ENCODE measurements at regions of chr11 and their contacts with region 1.

Region 1: GRCh38 chr11:9573052-9573774 is at the start of gene WEE1:
- DNase-seq: peak; percentile 86 to 98
- H3K4me3 ChIP-seq: peak within 1 kb of the TSS; percentile 87
- H3K27ac ChIP-seq: peak within 1 kb of the TSS; percentile 98
- H3K4me1 ChIP-seq: peaks cover 50% of the 10 kb centered on the region
- H3K27me3 ChIP-seq: no peaks in the 10 kb centered on the region
- CTCF ChIP-seq: no peak
- total RNA-seq, gene WEE1: 32.2 and 37.1 TPM in 2 replicates

Region 2: GRCh38 chr11:9506489-9507276 is 66.5 kb before region 1 on chr11:
- CTCF ChIA-PET with region 1: no interaction called
- POLR2A ChIA-PET with region 1: interaction called, 8 read pairs
- intact Hi-C with region 1: loop called (anchors 5 kb)
- DNase-seq: peak; percentile 49 to 62
- H3K4me3 ChIP-seq: no peak overlapping the region
- H3K27ac ChIP-seq: 0 out of 2 replicates have a peak overlapping the region, but pooled peaks have one; percentile 13
- H3K4me1 ChIP-seq: no peaks in the 10 kb centered on the region
- H3K27me3 ChIP-seq: no peaks in the 10 kb centered on the region
- CTCF ChIP-seq: peak; percentile 84

Region 3: DNA sequence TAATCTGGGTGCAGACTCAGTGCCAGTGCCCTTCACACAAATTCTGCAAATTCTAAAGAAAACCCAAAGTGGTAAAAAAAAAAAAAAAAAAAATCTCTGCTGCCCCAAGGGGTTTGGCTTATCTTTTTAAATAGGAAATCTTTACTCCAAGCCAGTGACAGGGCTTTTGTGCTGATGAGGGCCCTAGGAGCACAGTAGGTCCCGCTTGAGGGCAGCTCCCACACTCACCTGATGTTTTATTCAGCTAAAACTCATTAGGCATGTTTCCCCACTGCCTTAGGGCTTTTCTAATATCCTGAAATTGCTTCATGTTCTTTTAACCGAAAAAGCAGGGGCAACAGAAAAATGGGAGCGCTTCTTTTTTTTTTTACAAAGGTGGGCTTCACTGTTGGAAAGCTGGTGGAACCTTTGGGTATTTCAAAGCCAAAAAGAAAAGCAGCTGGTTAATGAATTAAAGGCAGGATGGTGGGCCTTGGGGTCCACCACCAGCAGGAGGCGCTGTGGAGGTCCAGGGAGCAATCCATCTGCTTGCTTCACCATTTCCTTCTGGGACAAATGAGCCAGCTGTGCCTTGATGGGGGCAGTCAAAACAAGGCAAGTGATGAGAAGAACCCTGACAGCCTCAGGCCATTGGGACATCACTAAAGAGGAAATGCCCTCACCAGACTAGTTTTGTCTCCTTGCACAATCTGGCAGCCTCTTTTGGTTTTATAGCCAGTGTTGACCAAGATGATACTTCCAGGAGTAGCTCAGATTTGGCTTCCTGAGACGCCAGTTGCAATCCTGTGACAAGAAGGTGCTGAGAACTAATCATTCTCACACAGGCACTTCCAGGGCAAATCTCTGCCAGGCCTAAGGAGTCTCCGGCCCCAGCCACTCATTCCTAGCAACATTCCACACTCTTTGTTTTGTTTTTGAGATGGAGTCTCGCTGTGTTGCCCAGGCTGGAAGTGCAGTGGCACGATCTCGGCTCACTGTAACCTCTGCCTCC is 38.1 kb before region 1 on chr11:
- CTCF ChIA-PET with region 1: interaction called, 5 read pairs
- POLR2A ChIA-PET with region 1: no interaction called
- intact Hi-C with region 1: loop called (anchors 1 kb)
- DNase-seq: peak; percentile 48 to 88
- H3K4me3 ChIP-seq: no peak overlapping the region
- H3K27ac ChIP-seq: peak overlapping the region; percentile 54
- H3K4me1 ChIP-seq: peaks cover 30% of the 10 kb centered on the region
- H3K27me3 ChIP-seq: no peaks in the 10 kb centered on the region
- CTCF ChIP-seq: peak; percentile 86

Region 4: DNA sequence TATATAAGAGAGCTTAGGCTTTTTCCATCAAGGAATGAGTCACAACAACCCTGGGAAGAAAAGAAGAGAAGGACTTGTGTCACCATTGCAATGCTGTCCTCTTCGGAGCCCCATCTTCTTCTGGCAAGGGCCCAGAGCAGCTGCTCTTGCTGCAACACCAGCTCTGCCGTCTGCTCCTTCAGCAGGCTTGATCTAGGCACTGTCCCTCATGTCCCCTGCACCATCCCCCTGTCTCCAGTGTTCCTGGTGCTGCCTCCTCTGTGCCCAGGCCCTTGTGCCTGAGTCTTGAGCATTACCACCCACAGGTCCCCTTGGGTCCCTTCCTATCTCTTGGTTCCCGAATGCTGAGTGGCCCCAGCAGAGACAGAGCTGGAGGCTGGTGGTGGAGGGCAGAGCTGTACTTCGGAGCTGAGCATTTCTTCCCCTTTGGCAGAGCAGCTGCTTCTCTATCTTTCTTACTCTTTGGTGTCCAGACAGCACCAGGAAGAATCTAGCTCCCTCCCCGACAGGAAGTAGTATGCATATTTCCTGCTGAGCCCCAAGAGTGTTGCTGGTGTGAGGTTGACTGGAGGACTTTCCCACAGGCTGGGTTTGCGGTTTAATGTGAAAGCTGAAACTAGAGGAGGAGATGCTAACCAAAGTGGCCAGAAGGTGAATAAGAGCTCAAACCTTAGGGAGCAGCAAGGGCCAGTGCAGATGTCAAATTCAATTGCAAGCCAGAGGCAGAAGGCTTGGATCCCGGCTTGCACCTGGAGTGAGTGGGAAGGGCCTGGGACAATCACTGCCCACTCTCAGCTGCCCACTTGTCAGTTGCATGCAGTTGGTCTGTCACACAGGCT is 28.0 kb after region 1 on chr11:
- CTCF ChIA-PET with region 1: interaction called, 3 read pairs
- POLR2A ChIA-PET with region 1: interaction called, 17 read pairs
- intact Hi-C with region 1: loop called (anchors 1 kb)
- DNase-seq: peak; percentile 53 to 84
- H3K4me3 ChIP-seq: peak overlapping the region; percentile 35; the same call in 1 of the 2 replicates
- H3K27ac ChIP-seq: peak overlapping the region; percentile 97
- H3K4me1 ChIP-seq: peaks cover 24% of the 10 kb centered on the region
- H3K27me3 ChIP-seq: no peaks in the 10 kb centered on the region
- CTCF ChIP-seq: no peak